Dorsolateral prefrontal cortex (tissue), 120 donors: ENCODE measurements at regions of chr21 and their contacts with region 1.

Region 1: DNA sequence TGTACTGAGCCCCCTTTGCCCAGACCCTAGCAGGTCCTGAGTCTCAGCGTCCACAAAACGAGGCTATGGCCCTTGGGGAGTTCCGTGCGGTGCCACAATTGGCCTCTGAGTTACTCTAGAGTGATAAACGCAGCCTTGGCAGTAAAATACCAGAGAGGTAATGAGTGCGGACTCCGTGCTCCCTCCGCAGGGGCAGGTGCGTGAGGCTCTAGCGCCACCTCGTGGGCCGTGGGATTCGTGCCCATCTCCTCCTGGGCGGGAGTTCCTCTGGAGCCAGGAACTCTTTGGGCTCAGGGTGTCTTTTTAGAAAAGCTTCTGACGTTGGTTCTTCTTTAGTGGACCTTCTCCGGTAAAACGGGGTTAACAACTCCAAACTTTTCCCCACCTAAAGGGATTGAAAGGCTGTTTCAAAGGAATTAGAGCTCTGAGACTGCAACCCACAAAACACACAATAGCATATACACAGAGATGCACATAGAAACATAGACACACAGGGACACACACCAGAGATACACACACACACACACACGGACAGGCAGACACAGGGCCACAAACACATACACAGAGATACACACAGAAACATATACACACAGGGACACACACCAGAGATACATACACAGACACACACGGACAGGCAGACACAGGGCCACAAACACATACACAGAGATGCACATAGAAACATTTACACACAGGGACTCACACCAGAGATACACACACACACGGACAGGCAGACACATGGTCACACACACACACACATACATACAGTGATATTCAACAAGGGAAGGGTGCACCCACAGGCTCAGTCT is 99.4 kb downstream of the KCNJ15 start:
- DNase-seq: peak; percentile 57 to 84 (median 75)
- H3K4me3 ChIP-seq: peak overlapping the region in 1 of 59 donors; percentile 18
- H3K27ac ChIP-seq: no peak overlapping the region
- H3K27me3 ChIP-seq: peaks cover 0 to 12% (median 0%) of the 10 kb centered on the region in 45 donors
- CTCF ChIP-seq: peak; percentile 67 to 96 (median 90)

Region 2: DNA sequence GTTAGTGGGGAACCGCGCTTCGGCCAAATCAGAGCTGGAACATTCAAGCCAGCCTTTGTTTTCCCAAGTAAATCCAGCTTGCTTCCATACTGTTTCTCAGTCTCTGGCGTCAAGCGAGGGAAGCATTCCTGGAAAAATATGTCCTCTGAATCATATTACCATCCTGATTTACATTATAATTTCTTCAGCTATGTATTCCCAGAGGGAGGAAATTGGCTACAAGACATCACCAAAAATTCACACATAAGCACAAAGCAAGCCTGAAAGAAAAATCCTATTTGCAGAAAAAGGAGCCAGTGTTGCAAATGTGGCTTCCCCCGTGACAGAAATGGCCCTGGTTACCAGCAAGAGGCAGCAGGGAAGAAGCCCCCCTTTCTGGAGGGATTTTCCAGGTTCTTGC is 673.2 kb before region 1 on chr21:
- intact Hi-C with region 1: loop called in 1 of 2 experiments (anchors 5 kb)
- DNase-seq: no peak
- H3K4me3 ChIP-seq: no peak overlapping the region
- H3K27ac ChIP-seq: peak overlapping the region in 47 of 59 donors; percentile 2 to 83 (median 59)
- H3K27me3 ChIP-seq: peaks cover 0 to 4% (median 0%) of the 10 kb centered on the region in 45 donors
- CTCF ChIP-seq: no peak

Region 3: GRCh38 chr21:37700641-37701202 is 655.5 kb before region 1 on chr21:
- intact Hi-C with region 1: loop called (anchors 2 kb)
- DNase-seq: peak in 3 of 10 donors; percentile 38 to 43 (median 40)
- H3K4me3 ChIP-seq: no peak overlapping the region
- H3K27ac ChIP-seq: no peak overlapping the region
- H3K27me3 ChIP-seq: peaks cover 0 to 16% (median 0%) of the 10 kb centered on the region in 45 donors
- CTCF ChIP-seq: peak; percentile 43 to 79 (median 70)

Region 4: DNA sequence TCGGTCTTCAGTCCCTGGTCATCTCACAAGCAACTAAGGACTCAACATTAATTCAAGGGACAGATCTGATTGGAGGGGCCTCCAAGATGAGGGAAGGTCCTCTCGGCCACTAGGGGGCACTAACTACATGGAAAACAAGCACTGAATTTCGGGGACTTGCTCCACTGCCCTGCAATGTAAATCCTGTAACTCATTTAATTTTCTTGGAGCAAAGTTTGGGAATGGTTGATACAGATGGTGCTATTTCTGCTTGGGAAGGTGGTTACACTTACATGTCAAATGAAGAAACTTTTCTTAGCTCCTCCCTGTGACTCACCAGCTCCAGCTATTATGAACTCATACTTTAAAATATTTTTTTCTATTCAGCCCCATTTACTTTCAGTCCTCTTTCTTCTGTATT is 196.8 kb before region 1 on chr21:
- intact Hi-C with region 1: loop called (anchors 5 to 10 kb)
- DNase-seq: peak in 5 of 10 donors; percentile 25 to 52 (median 40)
- H3K4me3 ChIP-seq: no peak overlapping the region
- H3K27ac ChIP-seq: no peak overlapping the region
- H3K27me3 ChIP-seq: peaks cover 0 to 17% (median 0%) of the 10 kb centered on the region in 45 donors
- CTCF ChIP-seq: peak; percentile 47 to 78 (median 68)

Region 5: GRCh38 chr21:38165466-38166172 is 190.6 kb before region 1 on chr21:
- intact Hi-C with region 1: loop called (anchors 5 to 10 kb)
- DNase-seq: peak in 1 of 10 donors; percentile 71
- H3K4me3 ChIP-seq: no peak overlapping the region
- H3K27ac ChIP-seq: no peak overlapping the region
- H3K27me3 ChIP-seq: peaks cover 0 to 4% (median 0%) of the 10 kb centered on the region in 45 donors
- CTCF ChIP-seq: no peak

Region 6: DNA sequence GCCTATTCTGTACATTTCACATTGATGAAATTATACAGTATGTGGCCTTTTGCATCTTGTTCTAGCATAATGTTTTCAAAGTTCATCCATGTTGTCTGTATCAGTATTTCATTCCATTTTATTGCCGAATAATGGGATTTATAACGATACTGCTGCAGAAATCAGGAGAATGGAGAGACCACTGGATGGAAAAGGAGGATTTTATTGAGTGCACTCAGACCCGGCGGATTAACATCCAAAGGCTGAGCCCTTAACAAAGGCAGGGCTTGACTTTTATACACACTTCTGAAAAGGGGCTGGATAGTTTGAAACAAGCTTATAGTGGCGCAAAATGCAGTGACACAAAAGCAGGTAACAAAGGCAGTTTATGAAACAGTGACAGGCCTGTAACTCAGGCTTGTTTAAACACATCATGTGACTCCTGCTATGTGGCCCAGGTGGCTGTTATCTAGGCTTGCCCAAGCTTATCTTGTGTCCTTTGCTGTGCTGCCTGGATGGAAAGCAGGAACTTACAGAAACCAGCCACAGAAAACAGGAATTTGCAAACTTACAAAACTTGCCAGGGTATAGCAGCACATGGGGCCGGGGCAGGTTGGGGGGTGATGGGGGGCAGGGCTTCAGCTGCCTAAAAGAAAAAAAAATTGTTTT is 132.2 kb before region 1 on chr21:
- intact Hi-C with region 1: loop called (anchors 2 to 5 kb)
- DNase-seq: no peak
- H3K4me3 ChIP-seq: no peak overlapping the region
- H3K27ac ChIP-seq: no peak overlapping the region
- H3K27me3 ChIP-seq: peaks cover 0 to 7% (median 0%) of the 10 kb centered on the region in 45 donors
- CTCF ChIP-seq: no peak